ENCODE measurements at regions of chr17 and their contacts with region 1.

Region 1: GRCh38 chr17:48024937-48025906 is 12.4 kb downstream of the COPZ2 start:
- H3K4me3 ChIP-seq: peak overlapping the region; percentile 45
- H3K27ac ChIP-seq: no peak overlapping the region
- H3K4me1 ChIP-seq: peaks cover 14% of the 10 kb centered on the region
- CTCF ChIP-seq: peak; percentile 86

Region 2: DNA sequence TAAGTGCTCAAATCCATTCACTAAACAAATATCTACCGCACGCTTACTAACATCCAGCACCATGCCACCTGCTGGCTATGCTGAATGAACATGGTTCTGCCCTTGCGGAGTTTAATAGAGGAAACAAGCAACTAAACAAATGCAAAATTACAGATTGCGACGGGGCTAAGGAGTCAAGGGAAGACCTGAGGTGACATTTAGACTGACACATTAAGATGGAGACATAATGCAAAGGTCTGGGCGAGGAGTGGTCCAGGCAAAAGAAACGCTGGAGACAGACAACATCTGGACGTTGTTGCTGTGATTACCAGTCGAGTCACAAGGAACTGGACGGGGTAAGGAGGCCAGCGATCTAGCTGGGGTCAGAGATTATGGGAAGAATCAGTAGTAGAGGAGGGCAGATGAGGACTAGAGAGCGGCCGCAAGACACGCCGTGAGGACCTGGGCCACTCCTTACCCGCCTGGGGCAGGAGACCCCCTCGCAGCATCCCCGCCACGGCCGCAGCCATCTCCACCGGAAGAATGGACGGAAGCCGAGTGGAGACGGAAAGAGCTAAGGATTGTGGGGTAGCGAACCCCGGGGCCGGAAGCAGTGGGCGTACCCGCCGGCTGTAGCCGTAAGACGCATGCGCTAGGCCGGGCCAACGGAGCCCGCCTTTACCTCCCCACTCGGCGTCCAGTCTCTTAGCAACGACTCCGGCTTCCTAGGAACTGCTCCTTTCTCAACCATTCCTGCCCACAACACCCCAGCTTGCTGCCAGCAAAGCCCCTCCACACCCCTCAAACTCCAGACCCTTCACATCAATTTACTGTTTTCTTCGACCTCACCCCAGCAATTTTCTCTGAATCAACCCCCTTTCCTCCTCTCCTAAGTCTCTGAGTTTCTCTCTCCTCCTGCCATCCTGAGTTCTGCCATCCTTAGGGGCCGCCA is 194.0 kb before region 1 on chr17 and contains the starts of genes LRRC46 and MRPL10:
- CTCF ChIA-PET with region 1: no interaction called
- POLR2A ChIA-PET with region 1: no interaction called
- H3K4me3 ChIP-seq: peak within 1 kb of the TSS; percentile 92
- H3K27ac ChIP-seq: peak within 1 kb of the TSS; percentile 21
- H3K4me1 ChIP-seq: peaks cover 7% of the 10 kb centered on the region; the same call in 1 of the 2 replicates
- CTCF ChIP-seq: peak; percentile 46; the same call in 1 of the 2 replicates

Region 3: GRCh38 chr17:47905221-47905781 is 119.9 kb before region 1 on chr17:
- CTCF ChIA-PET with region 1: no interaction called
- POLR2A ChIA-PET with region 1: no interaction called
- H3K4me3 ChIP-seq: no peak overlapping the region
- H3K27ac ChIP-seq: no peak overlapping the region
- H3K4me1 ChIP-seq: no peaks in the 10 kb centered on the region
- CTCF ChIP-seq: no peak

Region 4: DNA sequence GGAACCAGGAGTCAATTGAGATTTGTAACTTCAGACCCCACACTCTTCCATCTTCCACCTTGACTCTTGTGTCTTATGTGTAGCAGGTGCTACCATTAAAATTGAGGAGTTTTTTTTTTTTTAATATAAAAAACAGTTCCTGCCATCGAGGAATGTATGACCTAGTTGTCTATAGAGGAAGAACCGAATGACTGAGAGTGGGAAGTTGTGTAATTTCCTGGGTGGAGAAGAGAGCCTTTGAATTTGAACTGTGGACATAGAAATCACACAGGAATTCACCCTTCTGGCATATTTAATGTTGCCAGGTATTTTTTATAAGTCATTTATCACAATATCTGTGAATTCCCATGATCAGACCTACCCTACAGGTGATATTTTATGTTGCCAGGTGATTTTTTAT is 107.2 kb before region 1 on chr17:
- CTCF ChIA-PET with region 1: no interaction called
- POLR2A ChIA-PET with region 1: no interaction called
- H3K4me3 ChIP-seq: no peak overlapping the region
- H3K27ac ChIP-seq: no peak overlapping the region
- H3K4me1 ChIP-seq: no peaks in the 10 kb centered on the region
- CTCF ChIP-seq: no peak

Region 5: DNA sequence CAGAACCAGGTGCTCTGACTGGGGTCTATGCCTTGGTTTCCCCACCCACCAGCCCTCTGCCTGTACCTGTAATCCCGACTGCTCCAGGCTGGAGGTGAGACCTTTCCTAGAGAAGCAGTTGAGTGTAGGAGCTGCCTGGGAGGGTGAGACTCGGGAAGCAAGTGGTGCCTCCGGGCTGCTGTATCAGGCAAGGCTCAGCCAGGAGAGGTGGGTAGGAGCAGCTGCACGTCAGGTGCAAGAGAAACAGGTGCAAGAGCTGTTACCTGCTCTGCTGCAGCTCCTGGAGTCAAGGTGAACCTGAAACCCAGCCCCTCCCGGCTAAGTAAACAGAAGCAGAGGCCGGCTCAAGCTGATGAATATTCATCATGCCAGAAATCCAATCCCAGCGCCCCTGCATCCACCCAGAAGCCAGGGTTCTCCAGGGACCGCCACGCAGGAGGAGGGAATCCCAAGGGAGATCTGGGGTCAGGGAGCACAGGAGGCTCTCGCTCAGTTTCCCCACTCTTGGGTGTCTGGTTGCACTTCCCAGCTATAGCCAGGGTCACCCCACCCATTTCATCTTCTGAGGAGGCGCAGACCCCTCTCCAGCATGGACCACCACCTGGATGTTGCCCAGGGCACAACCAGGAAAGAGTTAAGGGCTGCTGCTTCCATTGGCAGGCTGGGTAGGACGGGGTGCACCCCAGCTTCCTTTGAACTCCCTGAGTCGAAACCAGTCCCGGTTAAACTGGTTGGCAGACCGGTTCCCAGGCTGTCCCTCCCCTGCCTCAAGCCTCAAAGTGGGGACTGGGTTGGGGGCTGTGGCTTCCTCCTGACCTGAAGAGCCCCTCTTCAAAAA is 67.4 kb before region 1 on chr17 and contains the start of gene PRR15L:
- CTCF ChIA-PET with region 1: interaction called, 359 read pairs
- POLR2A ChIA-PET with region 1: no interaction called
- H3K4me3 ChIP-seq: no peak within 1 kb of the TSS
- H3K27ac ChIP-seq: peak within 1 kb of the TSS; percentile 36; the same call in 1 of the 2 replicates
- H3K4me1 ChIP-seq: peaks cover 28% of the 10 kb centered on the region
- CTCF ChIP-seq: no peak

Region 6: DNA sequence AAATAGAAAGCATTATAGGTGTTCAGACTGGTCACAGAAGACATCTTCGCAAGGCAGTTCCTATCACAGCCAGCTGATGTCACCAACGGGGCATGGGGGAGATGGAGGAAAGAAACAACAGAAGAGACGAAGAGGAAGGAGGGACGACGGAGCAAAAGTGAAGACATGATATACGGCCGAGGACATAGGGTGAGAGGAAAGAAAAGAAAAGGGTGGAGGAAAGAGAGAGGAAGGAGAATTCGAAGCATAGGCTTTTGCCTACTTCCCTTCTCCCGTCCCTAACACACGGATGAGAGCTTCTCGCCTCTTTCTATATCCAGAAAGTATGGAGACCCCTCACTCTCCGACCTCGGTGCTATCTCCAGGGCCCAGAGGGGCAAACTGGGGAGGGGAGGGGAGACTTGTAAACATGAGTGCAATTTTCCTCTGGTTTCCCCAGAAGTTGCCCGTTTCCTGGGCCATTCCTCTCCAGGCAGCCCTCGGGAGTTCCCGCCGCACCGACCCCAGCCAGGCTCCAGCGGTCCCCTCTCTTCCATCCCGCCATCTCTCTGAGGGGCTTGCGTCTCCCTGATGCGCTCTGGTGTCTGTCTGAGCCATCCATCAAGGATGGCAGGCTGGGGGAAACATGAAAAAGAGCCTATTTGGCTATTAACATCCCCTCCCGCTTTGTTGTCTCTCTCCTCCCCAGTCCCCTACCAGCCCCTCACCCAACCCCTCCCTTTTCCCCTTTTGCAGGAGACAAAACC is 13.6 kb before region 1 on chr17:
- CTCF ChIA-PET with region 1: interaction called, 34 read pairs
- POLR2A ChIA-PET with region 1: interaction called, 3 read pairs
- H3K4me3 ChIP-seq: peak overlapping the region; percentile 27
- H3K27ac ChIP-seq: no peak overlapping the region
- H3K4me1 ChIP-seq: peaks cover 7% of the 10 kb centered on the region
- CTCF ChIP-seq: peak; percentile 78

Region 7: DNA sequence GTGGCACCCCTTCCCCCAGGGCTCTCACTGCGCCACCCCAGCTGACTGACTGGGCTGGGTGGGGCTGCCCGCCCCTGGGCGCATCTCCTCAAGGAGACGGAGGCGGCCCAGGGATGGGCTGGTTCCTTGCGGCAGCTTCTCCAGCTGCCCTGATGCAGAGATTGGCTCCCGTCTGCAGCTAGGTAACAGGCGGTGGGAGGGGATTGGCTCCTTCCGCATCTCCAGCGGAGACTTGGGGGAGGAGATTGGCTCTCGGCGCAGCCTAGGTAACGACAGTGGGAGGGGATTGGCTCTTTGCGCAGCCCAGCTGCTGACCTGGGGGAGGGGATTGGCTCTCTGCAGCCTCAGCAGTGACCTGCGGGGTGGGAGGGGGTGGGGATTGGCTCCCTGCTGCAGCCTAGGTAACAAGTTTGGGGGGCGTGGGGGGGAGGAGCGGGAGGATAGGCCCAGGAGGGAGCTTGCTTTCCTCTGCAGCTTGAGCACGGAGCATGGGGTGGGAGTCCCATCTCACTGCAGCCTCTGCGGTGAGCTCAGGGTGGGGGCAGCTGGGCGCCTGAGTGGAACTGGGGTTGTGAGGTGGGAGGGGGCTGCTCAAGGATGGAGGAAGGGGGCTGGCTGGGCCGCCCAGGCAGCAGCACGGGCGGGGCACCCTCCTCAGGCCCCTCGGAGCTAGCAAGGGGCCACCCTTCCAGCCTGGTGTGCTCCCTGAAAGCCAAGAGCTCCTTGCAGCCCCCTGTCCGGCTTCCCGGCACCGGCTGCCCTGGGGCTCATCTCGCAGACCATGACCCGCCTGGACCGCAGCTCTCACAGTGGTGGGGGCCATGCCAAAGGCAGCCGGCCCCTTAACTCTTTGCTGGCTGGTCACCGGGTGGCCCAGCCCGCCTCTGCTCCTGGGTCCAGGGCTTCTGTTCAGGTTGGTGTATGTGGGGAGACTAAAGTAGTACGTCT is 29.3 kb after region 1 on chr17:
- CTCF ChIA-PET with region 1: interaction called, 30 read pairs
- POLR2A ChIA-PET with region 1: interaction called, 26 read pairs
- H3K4me3 ChIP-seq: no peak overlapping the region
- H3K27ac ChIP-seq: peak overlapping the region; percentile 77; the same call in 1 of the 2 replicates
- H3K4me1 ChIP-seq: peaks cover 49% of the 10 kb centered on the region
- CTCF ChIP-seq: no peak

Region 8: GRCh38 chr17:48093341-48094045 is 68.3 kb after region 1 on chr17:
- CTCF ChIA-PET with region 1: interaction called, 16 read pairs
- POLR2A ChIA-PET with region 1: interaction called, 4 read pairs
- H3K4me3 ChIP-seq: no peak overlapping the region
- H3K27ac ChIP-seq: no peak overlapping the region
- H3K4me1 ChIP-seq: peaks cover 8% of the 10 kb centered on the region
- CTCF ChIP-seq: no peak

Region 9: DNA sequence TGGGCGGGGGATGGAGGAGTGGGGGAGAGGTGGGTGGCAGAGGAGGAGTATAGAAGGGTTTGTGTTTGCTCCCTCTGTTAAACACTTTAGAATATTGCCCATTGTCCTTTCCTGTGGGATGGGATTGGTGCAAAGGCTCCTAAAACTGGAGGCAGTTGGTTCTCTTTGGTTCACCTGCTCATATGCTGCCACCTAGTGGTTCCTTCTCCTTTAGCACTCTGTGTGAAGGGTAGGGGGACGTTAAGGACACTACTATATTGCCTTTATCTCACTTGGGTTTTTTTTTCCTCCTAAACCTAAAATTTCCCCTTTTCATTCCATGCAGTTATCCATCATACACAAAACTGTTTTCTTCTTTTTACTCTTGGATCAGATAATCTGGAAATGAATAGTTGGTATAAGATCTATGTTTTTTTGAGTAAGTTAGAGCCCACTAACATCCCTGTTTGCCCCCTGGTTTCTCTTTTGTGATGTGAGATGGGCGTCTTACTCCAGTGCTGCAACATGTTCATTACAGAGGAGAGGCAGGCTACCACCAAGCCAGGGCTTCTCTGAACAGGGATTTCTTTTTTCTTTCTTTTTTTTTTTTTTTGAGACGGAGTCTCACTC is 106.1 kb after region 1 on chr17:
- CTCF ChIA-PET with region 1: interaction called, 105 read pairs
- POLR2A ChIA-PET with region 1: interaction called, 8 read pairs
- H3K4me3 ChIP-seq: no peak overlapping the region
- H3K27ac ChIP-seq: no peak overlapping the region
- H3K4me1 ChIP-seq: no peaks in the 10 kb centered on the region
- CTCF ChIP-seq: peak; percentile 68; the same call in 1 of the 2 replicates